Ovary (tissue), 10 donors: ENCODE measurements at regions of chr4 and their contacts with region 1.

Region 1: GRCh38 chr4:178090640-178091411 is 648.6 kb upstream of the AGA start:
- DNase-seq: no peak
- H3K4me3 ChIP-seq: no peak overlapping the region
- H3K27ac ChIP-seq: no peak overlapping the region
- H3K4me1 ChIP-seq: no peaks in the 10 kb centered on the region
- H3K27me3 ChIP-seq: no peaks in the 10 kb centered on the region
- CTCF ChIP-seq: no peak
- EP300 ChIP-seq: no peak
- POLR2A ChIP-seq: no peak

Region 2: DNA sequence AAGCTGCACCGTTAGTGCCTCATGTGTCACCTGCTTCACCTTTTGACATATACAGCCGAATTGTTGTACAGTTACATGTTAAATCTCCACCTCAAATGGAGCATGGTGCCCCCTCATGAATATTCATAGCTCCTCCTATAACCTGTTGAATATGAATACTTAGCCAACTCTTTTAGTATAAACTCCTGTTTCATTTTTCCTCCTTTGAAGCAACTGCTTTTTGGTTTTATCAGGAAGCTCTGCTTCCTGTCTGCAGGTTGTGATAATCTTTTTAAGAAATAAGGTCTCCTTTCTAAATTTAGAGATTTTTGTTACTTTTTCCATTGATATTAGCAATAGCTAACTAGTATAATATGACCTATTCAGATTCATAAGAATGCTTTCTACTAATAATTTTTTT is 780.6 kb after region 1 on chr4:
- intact Hi-C with region 1: loop called in 1 of 4 experiments (anchors 5 kb)
- DNase-seq: no peak
- H3K4me3 ChIP-seq: no peak overlapping the region
- H3K27ac ChIP-seq: no peak overlapping the region
- H3K4me1 ChIP-seq: no peaks in the 10 kb centered on the region
- H3K27me3 ChIP-seq: no peaks in the 10 kb centered on the region
- CTCF ChIP-seq: no peak
- EP300 ChIP-seq: no peak
- POLR2A ChIP-seq: no peak